Activated CD4-positive, alpha-beta memory T cell treated with anti-CD3 and anti-CD28 coated beads, Interleukin-2, amount 10 ng/mL, durations not matched to agents 7 days and 5 days (primary cell): ENCODE measurements at regions of chr22 and their contacts with region 1.

Region 1: GRCh38 chr22:17785185-17786184 is 11.2 kb upstream of the BID start:
- DNase-seq: peak; percentile 74
- H3K4me3 Mint-ChIP-seq: no peak overlapping the region
- H3K27ac Mint-ChIP-seq: no peak overlapping the region
- H3K4me1 Mint-ChIP-seq: peaks cover 12% of the 10 kb centered on the region
- H3K27me3 Mint-ChIP-seq: no peaks in the 10 kb centered on the region

Region 2: DNA sequence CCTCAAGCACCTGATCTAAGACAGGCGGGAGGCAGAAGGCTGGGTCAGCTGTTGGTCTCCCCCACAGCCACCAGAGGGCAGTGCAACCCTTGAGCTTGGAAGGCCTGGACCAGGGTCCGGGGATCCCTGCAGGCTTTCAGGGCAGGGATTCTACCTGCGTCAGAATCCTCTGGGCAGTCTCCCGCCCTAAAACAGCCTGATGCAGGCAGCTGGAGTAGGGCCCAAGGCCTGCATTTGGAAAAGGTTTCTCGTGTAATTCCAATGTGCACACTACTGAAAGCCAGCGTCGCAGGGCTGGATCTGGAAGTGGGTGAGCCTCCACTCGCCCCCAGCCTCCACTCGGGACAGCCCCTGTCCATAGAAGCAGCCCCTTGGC is 43.0 kb before region 1 on chr22:
- CTCF ChIA-PET with region 1: interaction called, 98 read pairs
- POLR2A ChIA-PET with region 1: no interaction called
- DNase-seq: peak; percentile 66
- H3K4me3 Mint-ChIP-seq: no peak overlapping the region
- H3K27ac Mint-ChIP-seq: no peak overlapping the region
- H3K4me1 Mint-ChIP-seq: no peaks in the 10 kb centered on the region
- H3K27me3 Mint-ChIP-seq: no peaks in the 10 kb centered on the region

Region 3: GRCh38 chr22:17754233-17754925 is 31.1 kb before region 1 on chr22:
- CTCF ChIA-PET with region 1: interaction called, 27 read pairs
- POLR2A ChIA-PET with region 1: interaction called, 3 read pairs
- DNase-seq: peak; percentile 36
- H3K4me3 Mint-ChIP-seq: no peak overlapping the region
- H3K27ac Mint-ChIP-seq: no peak overlapping the region
- H3K4me1 Mint-ChIP-seq: no peaks in the 10 kb centered on the region
- H3K27me3 Mint-ChIP-seq: no peaks in the 10 kb centered on the region

Region 4: DNA sequence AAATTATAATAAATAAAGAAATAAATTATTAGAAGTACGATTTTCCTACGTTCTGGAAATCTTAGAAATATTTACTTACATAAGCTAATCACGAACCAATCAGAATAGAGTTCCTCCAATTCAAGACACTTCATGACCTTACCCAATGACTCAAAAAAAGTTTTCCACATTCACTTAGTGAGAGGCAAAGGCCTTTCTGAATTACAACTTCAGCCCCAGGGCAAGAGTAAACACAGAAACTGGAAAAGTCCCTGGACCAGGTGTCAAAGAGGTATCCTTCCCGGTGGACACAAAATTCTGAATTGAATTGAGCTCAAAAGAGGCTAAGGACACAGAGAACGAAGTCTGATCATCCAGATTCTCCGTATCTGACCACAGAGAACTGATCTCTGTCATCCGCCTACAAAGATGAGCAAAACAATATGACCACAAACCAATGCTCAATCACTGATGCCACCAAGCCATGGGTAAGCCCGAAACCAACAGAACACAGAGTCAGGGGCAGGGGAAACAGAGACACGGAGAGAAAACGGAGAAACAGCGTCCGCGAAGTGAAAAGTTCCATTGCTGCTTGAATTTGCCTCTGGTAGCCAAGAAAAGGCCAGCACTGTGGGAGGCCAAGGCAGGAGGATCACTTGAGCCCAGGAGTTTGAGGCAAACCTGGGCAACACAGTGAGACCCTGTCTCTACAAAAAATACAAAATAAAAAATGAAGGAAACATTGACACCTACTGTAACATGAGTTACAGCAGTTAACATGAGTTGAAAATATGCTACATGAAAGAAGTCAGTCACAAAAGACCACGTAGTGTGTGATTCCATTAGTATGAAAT is 18.0 kb before region 1 on chr22:
- CTCF ChIA-PET with region 1: interaction called, 32 read pairs
- POLR2A ChIA-PET with region 1: interaction called, 6 read pairs
- DNase-seq: peak; percentile 74
- H3K4me3 Mint-ChIP-seq: peak overlapping the region; percentile 8
- H3K27ac Mint-ChIP-seq: peak overlapping the region; percentile 7
- H3K4me1 Mint-ChIP-seq: peaks cover 19% of the 10 kb centered on the region
- H3K27me3 Mint-ChIP-seq: peaks cover 41% of the 10 kb centered on the region

Region 5: DNA sequence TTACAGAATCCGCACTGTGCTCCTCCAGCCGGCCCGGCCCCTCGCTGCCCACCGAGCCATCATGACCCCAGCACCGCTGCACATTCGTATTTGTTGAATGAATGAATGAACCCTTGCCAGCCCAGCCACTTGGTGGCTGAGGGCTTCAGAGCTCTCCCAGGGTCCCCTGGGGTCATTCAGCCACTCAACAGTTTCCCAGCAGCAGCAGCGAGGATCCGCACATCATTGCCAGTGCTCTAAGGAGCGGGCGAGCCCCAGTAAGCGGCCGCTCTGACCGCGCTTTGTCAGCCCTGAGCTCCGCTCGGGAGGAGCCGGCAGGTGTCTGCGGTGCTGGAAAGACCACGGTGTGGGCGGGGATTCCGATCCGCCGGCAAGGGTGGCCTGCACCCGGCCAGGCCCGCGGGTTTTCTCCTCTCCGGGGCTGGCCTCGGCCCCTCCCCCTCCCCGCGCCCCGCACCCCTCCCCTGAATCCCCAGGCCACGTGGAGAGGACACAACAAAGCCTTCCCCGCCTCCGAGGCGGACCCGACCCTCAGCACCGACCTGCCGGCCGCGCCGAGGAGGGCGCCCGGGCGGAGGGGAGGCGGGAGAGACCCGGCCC is 11.8 kb before region 1 on chr22:
- CTCF ChIA-PET with region 1: interaction called, 32 read pairs
- POLR2A ChIA-PET with region 1: interaction called, 3 read pairs
- DNase-seq: peak; percentile 75
- H3K4me3 Mint-ChIP-seq: peak overlapping the region; percentile 79
- H3K27ac Mint-ChIP-seq: no peak overlapping the region
- H3K4me1 Mint-ChIP-seq: peaks cover 52% of the 10 kb centered on the region
- H3K27me3 Mint-ChIP-seq: peaks cover 33% of the 10 kb centered on the region

Region 6: GRCh38 chr22:17945888-17946648 is 160.6 kb after region 1 on chr22:
- CTCF ChIA-PET with region 1: no interaction called
- POLR2A ChIA-PET with region 1: no interaction called
- DNase-seq: no peak
- H3K4me3 Mint-ChIP-seq: no peak overlapping the region
- H3K27ac Mint-ChIP-seq: no peak overlapping the region
- H3K4me1 Mint-ChIP-seq: no peaks in the 10 kb centered on the region
- H3K27me3 Mint-ChIP-seq: no peaks in the 10 kb centered on the region